PC-9 (cell line): ENCODE measurements at regions of chr2 and their contacts with region 1.

Region 1: GRCh38 chr2:105391058-105391627 is 7.7 kb downstream of the FHL2 start:
- DNase-seq: peak; percentile 73 to 95
- H3K4me3 ChIP-seq: no peak overlapping the region
- H3K27ac ChIP-seq: peak overlapping the region; percentile 66
- H3K4me1 ChIP-seq: peaks cover 100% of the 10 kb centered on the region
- H3K27me3 ChIP-seq: no peaks in the 10 kb centered on the region
- CTCF ChIP-seq: no peak

Region 2: DNA sequence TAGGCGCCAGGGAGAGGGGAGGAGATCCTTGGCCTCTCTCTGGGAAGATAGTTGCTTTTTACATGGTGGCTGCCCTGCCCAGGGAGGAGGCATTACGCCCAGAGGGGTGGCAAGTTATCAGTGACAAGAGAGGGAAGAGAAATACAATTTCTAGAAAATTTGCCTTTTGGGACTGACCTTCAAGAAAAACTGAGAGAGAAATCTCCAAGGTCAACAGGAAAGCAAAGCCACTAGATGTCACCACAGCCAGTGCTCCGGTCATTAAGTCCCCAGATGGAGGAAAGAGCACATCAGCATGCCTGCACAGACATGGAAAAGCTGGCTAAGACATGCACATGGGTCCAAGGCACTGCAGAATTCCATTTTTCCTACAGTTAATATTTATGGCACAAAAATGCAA is 13.3 kb before region 1 on chr2:
- CTCF ChIA-PET with region 1: no interaction called
- POLR2A ChIA-PET with region 1: interaction called, 17 read pairs
- intact Hi-C with region 1: loop called (anchors 2 kb)
- DNase-seq: no peak
- H3K4me3 ChIP-seq: no peak overlapping the region
- H3K27ac ChIP-seq: no peak overlapping the region
- H3K4me1 ChIP-seq: peaks cover 39% of the 10 kb centered on the region
- H3K27me3 ChIP-seq: no peaks in the 10 kb centered on the region
- CTCF ChIP-seq: no peak

Region 3: DNA sequence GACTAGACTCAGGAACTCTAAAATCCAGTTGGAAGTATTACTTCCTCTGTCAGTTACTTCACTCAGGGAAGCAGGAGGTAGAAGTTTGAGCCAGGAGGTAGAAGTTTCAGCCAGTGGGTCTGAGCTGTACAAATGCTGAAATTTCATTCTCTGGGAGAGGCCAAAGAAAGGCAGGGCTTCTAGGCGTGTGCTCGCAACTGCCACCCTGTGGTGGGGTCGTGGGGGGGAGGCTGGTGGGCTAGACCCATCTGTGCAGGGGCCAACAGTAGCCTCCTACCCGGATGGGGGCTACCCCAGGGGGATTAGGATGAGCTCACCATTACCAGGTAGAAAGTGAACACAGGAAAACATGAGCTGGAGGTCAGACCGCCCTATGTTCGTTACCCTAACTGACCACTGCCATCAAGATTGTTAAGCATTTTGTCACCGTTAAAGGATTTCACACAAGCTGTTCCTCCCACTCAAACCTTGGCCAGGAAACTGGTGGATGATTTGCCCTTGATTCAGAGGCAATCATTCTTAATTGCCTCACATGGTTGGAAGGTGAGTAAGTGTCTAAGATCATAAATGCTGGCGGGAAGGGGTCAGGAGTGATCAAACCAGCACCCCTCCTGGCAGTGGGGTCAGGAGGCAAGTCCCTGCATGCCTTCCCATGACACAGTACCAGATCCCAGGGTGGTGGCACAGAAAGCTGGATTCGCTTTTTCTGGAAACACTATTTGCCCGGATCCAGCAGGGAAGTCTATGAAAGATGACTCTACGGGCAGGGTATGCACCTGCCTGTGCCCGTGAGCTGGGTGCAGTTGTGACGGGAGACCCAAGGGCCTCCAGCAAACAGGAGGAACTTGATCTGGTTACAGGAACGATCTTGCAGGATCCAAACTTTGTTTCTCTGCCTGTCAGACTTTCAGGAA is 12.9 kb after region 1 on chr2:
- CTCF ChIA-PET with region 1: interaction called, 3 read pairs
- POLR2A ChIA-PET with region 1: interaction called, 30 read pairs
- intact Hi-C with region 1: loop called (anchors 1 kb)
- DNase-seq: peak; percentile 82 to 98
- H3K4me3 ChIP-seq: peak overlapping the region; percentile 41; the same call in 1 of the 2 replicates
- H3K27ac ChIP-seq: peak overlapping the region; percentile 96
- H3K4me1 ChIP-seq: peaks cover 77% of the 10 kb centered on the region
- H3K27me3 ChIP-seq: no peaks in the 10 kb centered on the region
- CTCF ChIP-seq: peak; percentile 64

Region 4: GRCh38 chr2:105510761-105511610 is 119.8 kb after region 1 on chr2:
- CTCF ChIA-PET with region 1: interaction called, 4 read pairs
- POLR2A ChIA-PET with region 1: interaction called, 11 read pairs
- intact Hi-C with region 1: no loop called
- DNase-seq: peak; percentile 11 to 71
- H3K4me3 ChIP-seq: no peak overlapping the region
- H3K27ac ChIP-seq: peak overlapping the region; percentile 64
- H3K4me1 ChIP-seq: peaks cover 26% of the 10 kb centered on the region
- H3K27me3 ChIP-seq: no peaks in the 10 kb centered on the region
- CTCF ChIP-seq: no peak

Region 5: DNA sequence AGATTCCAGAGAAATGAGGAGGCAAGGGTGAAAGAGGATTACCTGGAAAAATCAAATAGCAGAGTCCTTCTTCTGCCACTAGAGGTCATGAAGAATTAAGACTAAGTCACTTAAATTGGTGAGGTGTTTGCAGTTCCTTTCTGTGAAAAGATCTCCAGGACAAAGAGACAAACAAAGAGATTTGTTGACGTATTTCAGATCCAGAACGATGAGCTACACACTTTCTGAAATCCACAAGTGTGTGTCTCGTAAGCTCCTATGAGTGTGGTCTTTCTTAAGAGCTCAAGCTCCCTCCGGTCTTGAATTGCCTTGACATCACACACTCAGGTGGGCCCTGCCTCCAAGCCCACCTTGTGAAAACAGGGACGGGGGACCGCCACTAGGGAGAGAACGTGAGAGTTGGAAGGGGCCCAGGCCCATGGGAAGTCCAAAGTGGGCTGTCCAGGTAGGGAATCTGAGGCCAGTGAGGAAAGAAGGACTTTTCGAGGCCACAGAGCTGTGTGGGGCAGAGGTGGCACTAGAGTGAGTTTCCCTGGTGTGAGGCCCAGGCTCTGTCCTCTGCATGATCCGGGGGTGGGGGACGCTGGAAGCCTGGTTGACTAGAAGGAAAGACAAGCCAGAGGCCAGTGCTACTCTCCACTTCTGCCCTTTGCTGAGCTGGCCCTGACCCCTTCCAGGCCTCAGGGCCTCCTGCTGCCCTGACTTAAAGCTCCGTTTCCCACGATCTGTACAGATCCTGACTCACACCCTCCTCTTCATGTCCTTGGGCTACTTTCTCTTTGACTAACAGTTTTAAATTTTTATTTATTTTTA is 185.5 kb after region 1 on chr2:
- CTCF ChIA-PET with region 1: no interaction called
- POLR2A ChIA-PET with region 1: no interaction called
- intact Hi-C with region 1: no loop called
- DNase-seq: peak in 1 of 2 experiments; percentile 76
- H3K4me3 ChIP-seq: no peak overlapping the region
- H3K27ac ChIP-seq: no peak overlapping the region
- H3K4me1 ChIP-seq: peaks cover 5% of the 10 kb centered on the region
- H3K27me3 ChIP-seq: peaks cover 28% of the 10 kb centered on the region; the same call in 1 of the 2 replicates
- CTCF ChIP-seq: peak; percentile 69